ENCODE measurements at regions of chr7 and their contacts with region 1.

Region 1: DNA sequence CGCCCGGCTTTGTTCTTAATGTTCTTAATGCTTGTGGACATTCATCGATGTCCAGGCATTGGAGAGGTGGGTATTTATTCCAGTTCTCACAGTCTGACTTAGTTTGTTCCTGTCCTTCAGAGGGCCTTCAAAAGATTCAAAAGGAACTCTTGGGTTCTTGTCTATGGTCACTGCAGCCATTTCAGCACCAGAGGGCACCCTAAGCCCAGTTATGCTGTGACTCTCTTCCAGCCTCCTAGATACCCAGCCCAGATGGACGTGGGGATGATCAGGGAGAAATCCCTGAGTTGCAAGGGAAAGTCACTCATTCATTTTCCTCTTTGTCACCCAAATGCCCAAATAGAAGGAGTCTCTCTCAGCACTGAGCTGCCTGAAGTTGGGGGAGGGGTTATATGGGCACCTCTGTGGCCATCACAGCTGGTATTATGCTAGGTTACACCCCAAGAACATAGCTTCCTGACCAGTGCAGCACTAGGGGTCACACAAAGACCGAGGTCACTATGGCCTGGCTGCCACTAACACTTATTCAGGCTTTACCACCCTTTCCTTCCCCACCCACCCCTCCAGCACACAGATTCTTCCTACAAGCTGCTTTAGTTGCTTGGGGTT is 26.5 kb upstream of the CCDC126 start:
- DNase-seq: peak; percentile 77 to 81
- H3K4me3 ChIP-seq: no peak overlapping the region
- H3K27ac ChIP-seq: no peak overlapping the region
- H3K4me1 ChIP-seq: no peaks in the 10 kb centered on the region
- H3K27me3 ChIP-seq: no peaks in the 10 kb centered on the region
- CTCF ChIP-seq: peak; percentile 96

Region 2: DNA sequence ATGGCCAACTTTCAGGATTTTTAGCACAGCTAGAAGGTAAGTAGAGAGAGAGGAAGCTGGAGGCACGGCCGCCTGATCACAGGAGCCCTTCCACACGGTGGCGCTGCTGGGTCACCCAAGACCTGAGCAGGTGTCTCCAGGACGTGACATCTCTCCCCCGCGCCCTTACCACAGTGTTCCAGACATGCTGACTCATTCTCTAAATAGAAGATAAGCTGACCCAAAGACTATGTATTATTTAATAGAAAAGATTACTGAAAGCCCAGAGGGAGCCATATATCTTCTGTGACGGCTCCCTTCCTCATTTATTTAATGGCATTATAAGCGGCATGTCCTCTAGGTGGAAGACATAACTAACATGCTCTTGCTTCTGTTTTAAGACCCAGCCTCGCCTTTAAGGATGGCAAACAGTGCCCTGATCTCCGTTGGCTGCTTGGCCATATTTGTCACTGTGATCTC is 297.5 kb before region 1 on chr7:
- CTCF ChIA-PET with region 1: no interaction called
- POLR2A ChIA-PET with region 1: no interaction called
- intact Hi-C with region 1: no loop called
- DNase-seq: peak; percentile 98 to 99
- H3K4me3 ChIP-seq: peak overlapping the region; percentile 42
- H3K27ac ChIP-seq: peak overlapping the region; percentile 60
- H3K4me1 ChIP-seq: peaks cover 19% of the 10 kb centered on the region
- H3K27me3 ChIP-seq: no peaks in the 10 kb centered on the region
- CTCF ChIP-seq: peak; percentile 98

Region 3: GRCh38 chr7:23654508-23654907 is 83.8 kb after region 1 on chr7:
- CTCF ChIA-PET with region 1: no interaction called
- POLR2A ChIA-PET with region 1: no interaction called
- intact Hi-C with region 1: loop called (anchors 5 kb)
- DNase-seq: peak in 1 of 2 experiments; percentile 29
- H3K4me3 ChIP-seq: no peak overlapping the region
- H3K27ac ChIP-seq: no peak overlapping the region
- H3K4me1 ChIP-seq: no peaks in the 10 kb centered on the region
- H3K27me3 ChIP-seq: no peaks in the 10 kb centered on the region
- CTCF ChIP-seq: peak; percentile 66

Region 4: GRCh38 chr7:23696916-23697441 is 126.3 kb after region 1 on chr7:
- CTCF ChIA-PET with region 1: interaction called, 3 read pairs
- POLR2A ChIA-PET with region 1: no interaction called
- intact Hi-C with region 1: loop called (anchors 5 kb)
- DNase-seq: peak; percentile 50 to 69
- H3K4me3 ChIP-seq: no peak overlapping the region
- H3K27ac ChIP-seq: no peak overlapping the region
- H3K4me1 ChIP-seq: peaks cover under 1% of the 10 kb centered on the region; the same call in 1 of the 2 replicates
- H3K27me3 ChIP-seq: no peaks in the 10 kb centered on the region
- CTCF ChIP-seq: peak; percentile 93

Region 5: GRCh38 chr7:23966941-23967340 is 396.2 kb after region 1 on chr7:
- CTCF ChIA-PET with region 1: no interaction called
- POLR2A ChIA-PET with region 1: no interaction called
- intact Hi-C with region 1: no loop called
- DNase-seq: no peak
- H3K4me3 ChIP-seq: no peak overlapping the region
- H3K27ac ChIP-seq: no peak overlapping the region
- H3K4me1 ChIP-seq: peaks cover 12% of the 10 kb centered on the region
- H3K27me3 ChIP-seq: no peaks in the 10 kb centered on the region
- CTCF ChIP-seq: no peak

Region 6: GRCh38 chr7:24722386-24723177 is 1151.9 kb after region 1 on chr7:
- CTCF ChIA-PET with region 1: no interaction called
- POLR2A ChIA-PET with region 1: no interaction called
- intact Hi-C with region 1: loop called (anchors 1 kb)
- DNase-seq: peak in 1 of 2 experiments; percentile 28
- H3K4me3 ChIP-seq: no peak overlapping the region
- H3K27ac ChIP-seq: peak overlapping the region; percentile 31; the same call in 1 of the 2 replicates
- H3K4me1 ChIP-seq: peaks cover 26% of the 10 kb centered on the region
- H3K27me3 ChIP-seq: no peaks in the 10 kb centered on the region
- CTCF ChIP-seq: peak; percentile 59

Region 7: DNA sequence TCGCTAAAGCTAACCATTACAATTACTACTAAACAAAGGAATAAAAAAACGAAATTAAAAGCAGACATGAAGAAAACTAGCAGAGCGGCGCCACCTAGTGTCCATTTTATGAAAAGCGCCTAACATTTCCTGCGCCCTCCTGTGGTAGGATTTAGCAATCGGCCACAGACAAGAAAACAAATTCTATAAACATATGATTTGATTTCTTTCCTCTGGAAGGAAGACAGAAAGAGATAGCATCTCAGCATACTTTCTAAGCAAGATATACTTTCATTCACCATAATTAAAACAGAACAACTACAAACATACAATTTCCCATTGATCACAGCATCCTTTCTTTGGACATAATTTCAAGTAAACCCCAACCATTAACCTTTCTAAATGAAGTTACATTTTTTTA is 1995.3 kb after region 1 on chr7:
- CTCF ChIA-PET with region 1: no interaction called
- POLR2A ChIA-PET with region 1: no interaction called
- intact Hi-C with region 1: loop called (anchors 5 kb)
- DNase-seq: peak; percentile 66 to 67
- H3K4me3 ChIP-seq: no peak overlapping the region
- H3K27ac ChIP-seq: no peak overlapping the region
- H3K4me1 ChIP-seq: no peaks in the 10 kb centered on the region
- H3K27me3 ChIP-seq: peaks cover 45% of the 10 kb centered on the region
- CTCF ChIP-seq: peak; percentile 100

Measured in PC-9 (cell line).